ENCODE measurements at regions of chr16 and their contacts with region 1.

Region 1: DNA sequence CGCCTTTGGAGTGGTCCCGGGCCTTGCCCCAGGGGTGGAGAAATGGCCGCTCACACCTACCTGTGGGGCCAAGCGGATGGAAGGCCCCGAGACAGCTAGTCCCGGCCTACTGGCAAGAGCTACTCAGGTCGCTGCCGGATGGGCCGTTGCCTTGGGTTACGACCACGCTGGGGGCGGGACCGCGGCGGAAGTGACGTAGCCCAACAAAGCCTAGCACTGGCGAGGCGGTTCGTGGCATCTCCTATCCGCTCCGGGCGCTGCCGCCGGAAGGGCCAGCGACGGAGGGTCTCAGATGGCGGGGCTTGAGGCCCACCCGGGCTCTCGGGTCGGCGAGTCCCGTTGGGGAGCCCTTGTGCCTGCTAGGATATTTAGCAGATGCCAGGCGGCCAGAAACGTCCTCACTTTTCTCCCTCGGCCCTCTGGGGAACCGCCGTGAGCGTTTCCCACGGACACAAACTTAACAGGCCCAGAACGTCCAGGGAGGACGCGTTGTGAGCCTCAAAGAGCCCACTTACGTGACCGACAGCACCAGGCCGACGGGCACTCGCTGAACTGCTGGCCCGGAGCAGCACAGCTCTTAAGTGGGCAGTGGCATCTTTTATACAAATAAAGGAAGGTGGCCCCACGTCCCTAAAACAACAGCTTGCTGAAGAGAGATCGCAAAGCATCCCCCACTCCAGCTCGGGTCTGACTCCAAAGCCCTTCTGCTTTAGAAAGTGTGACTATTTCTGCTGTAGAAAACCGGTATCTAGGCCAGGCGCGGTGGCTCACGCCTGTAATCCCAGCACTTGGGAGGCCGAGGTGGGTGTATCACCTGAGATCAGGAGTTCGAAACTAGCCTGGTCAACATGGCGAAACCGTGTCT is at the start of gene C16orf46:
- DNase-seq: peak; percentile 98
- ATAC-seq: peak; percentile 77
- H3K4me3 ChIP-seq: peak within 1 kb of the TSS; percentile 67 to 84 (median 82)
- H3K4me3 Mint-ChIP-seq: peak within 1 kb of the TSS; percentile 47
- H3K27ac ChIP-seq: peak within 1 kb of the TSS; percentile 79 to 89
- H3K27ac Mint-ChIP-seq: peak within 1 kb of the TSS; percentile 51
- H3K4me1 ChIP-seq: peaks cover 4 to 12% of the 10 kb centered on the region in 2 donors
- H3K4me1 Mint-ChIP-seq: peaks cover 4% of the 10 kb centered on the region
- H3K27me3 ChIP-seq: no peaks in the 10 kb centered on the region
- H3K27me3 Mint-ChIP-seq: no peaks in the 10 kb centered on the region
- CTCF ChIP-seq: no peak
- total RNA-seq, gene C16orf46: 0.73 TPM in 1 of 2 replicates, not detected in the other

Region 2: DNA sequence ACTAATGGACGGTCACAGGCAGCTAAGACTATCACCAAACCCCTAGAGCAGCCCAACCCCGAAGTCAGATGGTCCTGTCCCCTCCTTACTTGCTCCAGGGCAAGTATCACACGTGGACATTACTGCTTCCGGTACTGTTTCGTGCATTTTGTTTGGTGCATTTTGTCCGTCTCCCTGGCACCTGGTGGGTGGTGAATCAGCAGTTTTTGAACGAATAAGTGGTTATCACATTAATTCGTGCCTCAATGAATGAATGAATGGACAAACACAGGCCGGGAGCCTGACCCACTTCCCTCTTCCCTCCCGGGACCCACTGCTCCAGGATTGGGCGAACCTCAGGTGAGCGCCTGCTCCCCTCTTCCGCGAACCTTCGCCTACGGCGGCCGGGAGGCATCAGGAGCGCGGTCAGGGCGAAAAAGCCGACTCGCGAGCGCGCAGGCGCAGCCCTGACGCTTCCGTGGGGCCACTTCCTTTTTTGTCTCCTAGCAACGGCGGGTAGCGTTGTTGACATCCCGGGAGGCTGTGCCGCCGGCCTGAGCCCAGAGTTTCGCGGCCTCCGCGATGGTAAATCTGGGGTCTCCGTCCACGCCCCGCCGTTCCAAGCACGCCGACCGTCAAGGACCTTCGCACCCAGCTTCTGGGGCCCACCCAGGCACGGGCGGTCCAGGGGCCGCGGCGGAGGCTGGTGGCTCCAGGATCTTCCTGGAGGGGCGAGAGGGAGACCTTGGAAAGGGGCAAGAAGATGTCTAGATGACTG is 536.6 kb before region 1 on chr16 and contains the start of gene DYNLRB2:
- CTCF ChIA-PET with region 1: no interaction called
- POLR2A ChIA-PET with region 1: no interaction called
- intact Hi-C with region 1: loop called (anchors 2 kb)
- DNase-seq: peak; percentile 96
- ATAC-seq: peak; percentile 89
- H3K4me3 ChIP-seq: peak within 1 kb of the TSS; percentile 59 to 85 (median 73)
- H3K4me3 Mint-ChIP-seq: peak within 1 kb of the TSS; percentile 97
- H3K27ac ChIP-seq: peak within 1 kb of the TSS; percentile 54 to 84
- H3K27ac Mint-ChIP-seq: peak within 1 kb of the TSS; percentile 98
- H3K4me1 ChIP-seq: peaks cover 8 to 11% of the 10 kb centered on the region in 2 donors
- H3K4me1 Mint-ChIP-seq: peaks cover 14% of the 10 kb centered on the region
- H3K27me3 ChIP-seq: peaks cover 0 to 6% (median 0%) of the 10 kb centered on the region in 4 experiments
- H3K27me3 Mint-ChIP-seq: peaks cover 12% of the 10 kb centered on the region
- CTCF ChIP-seq: no peak
- total RNA-seq, gene DYNLRB2: not detected in 2 replicates

Region 3: GRCh38 chr16:80996688-80997138 is 80.6 kb before region 1 on chr16:
- CTCF ChIA-PET with region 1: no interaction called
- POLR2A ChIA-PET with region 1: no interaction called
- intact Hi-C with region 1: no loop called
- DNase-seq: no peak
- ATAC-seq: no peak
- H3K4me3 ChIP-seq: peak overlapping the region; percentile 30 to 64 (median 50)
- H3K4me3 Mint-ChIP-seq: peak overlapping the region; percentile 92
- H3K27ac ChIP-seq: peak overlapping the region; percentile 56 to 67
- H3K27ac Mint-ChIP-seq: peak overlapping the region; percentile 84
- H3K4me1 ChIP-seq: peaks cover 5 to 9% of the 10 kb centered on the region in 2 donors
- H3K4me1 Mint-ChIP-seq: peaks cover 39% of the 10 kb centered on the region
- H3K27me3 ChIP-seq: no peaks in the 10 kb centered on the region
- H3K27me3 Mint-ChIP-seq: no peaks in the 10 kb centered on the region
- CTCF ChIP-seq: no peak

Region 4: DNA sequence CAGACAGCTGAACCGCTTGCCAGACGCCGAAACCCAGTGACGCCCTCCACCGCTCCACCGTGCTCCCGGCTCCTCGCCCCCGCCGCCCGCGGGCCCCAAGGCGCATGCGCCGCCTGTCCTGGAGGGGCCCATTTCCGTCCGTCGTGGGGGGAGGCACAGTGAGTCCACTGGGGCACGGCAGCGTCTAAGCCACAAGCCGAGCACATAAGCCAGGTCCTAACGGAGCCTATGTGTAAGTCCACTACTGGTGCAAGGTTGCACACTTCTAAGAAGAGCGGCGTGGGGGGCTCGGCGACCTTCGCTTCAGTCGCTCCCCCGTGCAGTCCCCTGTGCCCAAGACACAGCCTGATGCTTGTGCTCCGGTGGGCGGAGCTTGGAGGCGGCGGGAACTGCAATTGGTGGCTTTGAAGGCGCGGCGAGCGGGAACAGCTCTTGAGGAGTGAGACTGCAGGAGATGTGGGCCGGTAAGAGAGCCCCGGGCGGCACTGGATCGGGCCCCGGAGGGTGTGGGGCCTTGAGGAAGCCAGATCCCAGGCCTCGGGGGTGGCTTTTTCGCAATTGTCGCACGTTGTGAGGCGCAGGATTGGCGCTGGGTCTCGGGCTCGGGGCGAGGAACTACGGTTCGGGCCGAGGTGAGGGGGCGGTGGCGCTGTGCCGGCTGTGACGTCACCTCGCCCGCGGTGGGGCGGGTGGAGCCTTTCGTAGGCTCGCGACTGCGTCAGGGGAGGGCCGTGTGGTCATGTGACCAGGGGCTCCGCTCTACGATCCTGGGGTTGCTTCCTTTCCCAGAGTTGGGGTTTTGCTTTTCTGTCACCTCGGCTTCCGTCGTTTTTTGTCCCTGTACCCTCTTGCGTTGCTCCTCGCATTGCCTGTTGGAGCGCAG is 70.3 kb before region 1 on chr16 and contains the starts of genes CENPN and CMC2:
- CTCF ChIA-PET with region 1: interaction called, 9 read pairs
- POLR2A ChIA-PET with region 1: interaction called, 8 read pairs
- intact Hi-C with region 1: loop called (anchors 1 kb)
- DNase-seq: peak; percentile 100
- ATAC-seq: peak; percentile 82
- H3K4me3 ChIP-seq: peak within 1 kb of the TSS; percentile 89 to 97 (median 94)
- H3K4me3 Mint-ChIP-seq: peak within 1 kb of the TSS; percentile 99
- H3K27ac ChIP-seq: peak within 1 kb of the TSS; percentile 97 to 99
- H3K27ac Mint-ChIP-seq: peak within 1 kb of the TSS; percentile 100
- H3K4me1 ChIP-seq: peaks cover 25 to 38% of the 10 kb centered on the region in 2 donors
- H3K4me1 Mint-ChIP-seq: peaks cover 42% of the 10 kb centered on the region
- H3K27me3 ChIP-seq: no peaks in the 10 kb centered on the region
- H3K27me3 Mint-ChIP-seq: no peaks in the 10 kb centered on the region
- CTCF ChIP-seq: no peak
- total RNA-seq, gene CENPN: 3.5 and 4.0 TPM in 2 replicates
- total RNA-seq, gene CMC2: 21.4 and 25.7 TPM in 2 replicates

Region 5: GRCh38 chr16:81018496-81018895 is 58.8 kb before region 1 on chr16:
- CTCF ChIA-PET with region 1: no interaction called
- POLR2A ChIA-PET with region 1: no interaction called
- intact Hi-C with region 1: no loop called
- DNase-seq: no peak
- ATAC-seq: no peak
- H3K4me3 ChIP-seq: no peak overlapping the region
- H3K4me3 Mint-ChIP-seq: no peak overlapping the region
- H3K27ac ChIP-seq: no peak overlapping the region
- H3K27ac Mint-ChIP-seq: no peak overlapping the region
- H3K4me1 ChIP-seq: no peaks in the 10 kb centered on the region
- H3K4me1 Mint-ChIP-seq: no peaks in the 10 kb centered on the region
- H3K27me3 ChIP-seq: no peaks in the 10 kb centered on the region
- H3K27me3 Mint-ChIP-seq: no peaks in the 10 kb centered on the region
- CTCF ChIP-seq: no peak

Region 6: GRCh38 chr16:81035398-81035974 is 41.8 kb before region 1 on chr16 and contains the start of gene ATMIN:
- CTCF ChIA-PET with region 1: interaction called, 57 read pairs
- POLR2A ChIA-PET with region 1: interaction called, 3 read pairs
- intact Hi-C with region 1: loop called (anchors 1 kb)
- DNase-seq: peak; percentile 93
- ATAC-seq: peak; percentile 97
- H3K4me3 ChIP-seq: peak within 1 kb of the TSS; percentile 49 to 76 (median 66)
- H3K4me3 Mint-ChIP-seq: peak within 1 kb of the TSS; percentile 86
- H3K27ac ChIP-seq: peak within 1 kb of the TSS in 1 of 2 donors; percentile 40
- H3K27ac Mint-ChIP-seq: peak within 1 kb of the TSS; percentile 66
- H3K4me1 ChIP-seq: peaks cover 14 to 16% of the 10 kb centered on the region in 2 donors
- H3K4me1 Mint-ChIP-seq: peaks cover 22% of the 10 kb centered on the region
- H3K27me3 ChIP-seq: no peaks in the 10 kb centered on the region
- H3K27me3 Mint-ChIP-seq: no peaks in the 10 kb centered on the region
- CTCF ChIP-seq: peak; percentile 97
- total RNA-seq, gene ATMIN: 31.5 and 33.7 TPM in 2 replicates

Region 7: GRCh38 chr16:81053761-81054160 is 23.5 kb before region 1 on chr16:
- CTCF ChIA-PET with region 1: no interaction called
- POLR2A ChIA-PET with region 1: no interaction called
- intact Hi-C with region 1: loop called (anchors 1 kb)
- DNase-seq: no peak
- ATAC-seq: no peak
- H3K4me3 ChIP-seq: no peak overlapping the region
- H3K4me3 Mint-ChIP-seq: no peak overlapping the region
- H3K27ac ChIP-seq: no peak overlapping the region
- H3K27ac Mint-ChIP-seq: no peak overlapping the region
- H3K4me1 ChIP-seq: no peaks in the 10 kb centered on the region
- H3K4me1 Mint-ChIP-seq: no peaks in the 10 kb centered on the region
- H3K27me3 ChIP-seq: no peaks in the 10 kb centered on the region
- H3K27me3 Mint-ChIP-seq: no peaks in the 10 kb centered on the region
- CTCF ChIP-seq: no peak

Region 8: GRCh38 chr16:81095953-81096717 is 18.8 kb after region 1 on chr16 and contains the start of gene GCSH:
- CTCF ChIA-PET with region 1: interaction called, 3 read pairs
- POLR2A ChIA-PET with region 1: no interaction called
- intact Hi-C with region 1: loop called (anchors 1 kb)
- DNase-seq: peak; percentile 99
- ATAC-seq: peak; percentile 98
- H3K4me3 ChIP-seq: peak within 1 kb of the TSS; percentile 50 to 74 (median 65)
- H3K4me3 Mint-ChIP-seq: peak within 1 kb of the TSS; percentile 84
- H3K27ac ChIP-seq: peak within 1 kb of the TSS in 1 of 2 donors; percentile 62
- H3K27ac Mint-ChIP-seq: peak within 1 kb of the TSS; percentile 0
- H3K4me1 ChIP-seq: peaks cover 7 to 11% of the 10 kb centered on the region in 2 donors
- H3K4me1 Mint-ChIP-seq: peaks cover 11% of the 10 kb centered on the region
- H3K27me3 ChIP-seq: no peaks in the 10 kb centered on the region
- H3K27me3 Mint-ChIP-seq: no peaks in the 10 kb centered on the region
- CTCF ChIP-seq: no peak
- total RNA-seq, gene GCSH: 4.5 and 6.2 TPM in 2 replicates

Region 9: GRCh38 chr16:81457326-81458133 is 380.2 kb after region 1 on chr16:
- CTCF ChIA-PET with region 1: no interaction called
- POLR2A ChIA-PET with region 1: no interaction called
- intact Hi-C with region 1: no loop called
- DNase-seq: no peak
- ATAC-seq: peak; percentile 51
- H3K4me3 ChIP-seq: no peak overlapping the region
- H3K4me3 Mint-ChIP-seq: no peak overlapping the region
- H3K27ac ChIP-seq: peak overlapping the region in 1 of 2 donors; percentile 12
- H3K27ac Mint-ChIP-seq: peak overlapping the region; percentile 41
- H3K4me1 ChIP-seq: peaks cover 6 to 22% of the 10 kb centered on the region in 2 donors
- H3K4me1 Mint-ChIP-seq: peaks cover 68% of the 10 kb centered on the region
- H3K27me3 ChIP-seq: no peaks in the 10 kb centered on the region
- H3K27me3 Mint-ChIP-seq: no peaks in the 10 kb centered on the region
- CTCF ChIP-seq: no peak

Region 10: DNA sequence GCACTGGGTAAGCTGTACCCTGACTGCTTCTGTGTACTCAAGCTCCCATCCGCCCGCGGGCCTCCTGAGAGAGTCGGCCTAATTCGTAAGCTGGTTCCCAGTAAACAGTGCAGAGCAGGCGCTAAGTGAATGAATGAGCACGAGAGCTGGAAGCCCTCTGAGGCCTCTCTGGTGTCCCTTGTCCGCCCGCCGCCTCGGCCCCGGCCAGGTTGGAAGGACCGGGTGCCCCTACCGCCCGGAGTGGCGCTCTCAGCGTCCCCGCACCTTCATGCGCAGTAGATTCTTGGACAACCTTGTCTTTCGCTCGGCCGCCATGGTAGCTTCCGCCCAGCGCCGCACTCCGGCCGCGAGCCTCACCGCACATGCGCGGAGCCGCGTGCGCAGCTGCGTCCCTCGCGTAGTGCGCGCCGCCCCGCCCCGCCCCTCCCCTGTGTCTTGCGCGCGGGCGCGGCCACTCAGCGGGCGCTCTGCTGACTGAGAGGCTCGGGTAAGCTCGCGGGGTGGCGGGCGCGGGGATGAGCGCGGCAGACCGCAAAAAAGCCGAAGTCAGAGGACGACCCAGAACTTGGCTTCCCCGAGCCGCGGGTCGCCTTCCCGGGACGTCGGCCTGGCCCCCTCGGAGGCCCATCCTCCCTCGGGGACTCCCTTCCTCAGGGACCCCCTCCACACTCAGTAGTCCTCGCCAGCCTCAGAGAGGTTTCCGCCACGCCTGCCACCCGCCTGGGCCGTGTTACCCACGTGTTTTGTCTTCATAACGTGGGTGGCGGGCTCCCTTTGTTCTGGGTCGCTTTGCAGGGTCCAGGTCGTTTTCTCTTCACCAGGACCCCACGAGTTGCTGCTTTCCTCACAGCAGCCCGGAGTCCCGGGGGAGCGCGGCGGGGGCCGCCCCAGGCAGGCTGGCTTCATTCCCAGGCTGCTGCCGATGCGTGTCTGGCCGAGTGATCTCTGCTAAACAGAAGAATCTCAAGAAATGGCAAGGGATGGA is 1092.8 kb after region 1 on chr16 and contains the start of gene MPHOSPH6:
- CTCF ChIA-PET with region 1: no interaction called
- POLR2A ChIA-PET with region 1: no interaction called
- intact Hi-C with region 1: loop called (anchors 2 kb)
- DNase-seq: peak; percentile 95
- ATAC-seq: peak; percentile 97
- H3K4me3 ChIP-seq: peak within 1 kb of the TSS; percentile 68 to 88 (median 82)
- H3K4me3 Mint-ChIP-seq: peak within 1 kb of the TSS; percentile 98
- H3K27ac ChIP-seq: peak within 1 kb of the TSS; percentile 64 to 67
- H3K27ac Mint-ChIP-seq: peak within 1 kb of the TSS; percentile 96
- H3K4me1 ChIP-seq: peaks cover 10 to 15% of the 10 kb centered on the region in 2 donors
- H3K4me1 Mint-ChIP-seq: peaks cover 24% of the 10 kb centered on the region
- H3K27me3 ChIP-seq: peaks cover 2 to 24% (median 21%) of the 10 kb centered on the region in 4 experiments
- H3K27me3 Mint-ChIP-seq: peaks cover 28% of the 10 kb centered on the region
- CTCF ChIP-seq: no peak
- total RNA-seq, gene MPHOSPH6: 20.4 and 26.7 TPM in 2 replicates